GM12878 (cell line): ENCODE measurements at regions of chrX and their contacts with region 1.

Region 1: DNA sequence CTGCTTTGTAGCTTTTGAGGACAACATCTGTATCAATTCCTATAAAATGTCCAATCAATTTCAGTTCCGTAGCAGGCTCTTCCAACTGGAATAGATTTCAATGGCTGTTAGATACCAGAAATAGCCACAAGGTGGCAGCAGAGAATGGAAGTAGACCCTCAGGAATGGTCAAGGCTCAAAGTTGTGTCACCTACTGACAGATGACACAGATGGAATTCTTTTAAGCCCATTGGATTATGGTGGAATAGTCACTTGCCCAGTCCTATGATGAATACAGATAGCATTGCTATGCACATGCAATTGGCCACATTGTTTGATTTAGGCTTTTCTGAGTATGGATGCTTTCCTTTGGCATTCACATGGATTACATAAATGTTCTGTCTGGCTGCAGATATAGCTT is 130.4 kb upstream of the RADX start:
- DNase-seq: peak; percentile 15
- ATAC-seq: peak; percentile 37
- H3K4me3 ChIP-seq: no peak overlapping the region
- H3K27ac ChIP-seq: no peak overlapping the region
- H3K4me1 ChIP-seq: no peaks in the 10 kb centered on the region
- H3K27me3 ChIP-seq: no peaks in the 10 kb centered on the region
- CTCF ChIP-seq: peak; percentile 65 to 79 (median 68)
- EP300 ChIP-seq: no peak
- POLR2A ChIP-seq: no peak
- RAD21 ChIP-seq: peak; percentile 84

Region 2: GRCh38 chrX:106619797-106620196 is 138.5 kb after region 1 on chrX:
- CTCF ChIA-PET with region 1: interaction called, 53 read pairs
- POLR2A ChIA-PET with region 1: no interaction called
- RAD21 ChIA-PET with region 1: interaction called, 17 read pairs
- SMC1A ChIA-PET with region 1: interaction called, 25 read pairs
- in situ Hi-C with region 1: no loop called
- intact Hi-C with region 1: loop called (anchors 2 kb)
- DNase-seq: no peak
- ATAC-seq: peak; percentile 66
- H3K4me3 ChIP-seq: no peak overlapping the region
- H3K27ac ChIP-seq: no peak overlapping the region
- H3K4me1 ChIP-seq: no peaks in the 10 kb centered on the region
- H3K27me3 ChIP-seq: no peaks in the 10 kb centered on the region
- CTCF ChIP-seq: peak; percentile 45 to 53 (median 50); a peak in 5 of 6 replicates
- EP300 ChIP-seq: no peak
- POLR2A ChIP-seq: no peak
- RAD21 ChIP-seq: peak; percentile 53

Region 3: DNA sequence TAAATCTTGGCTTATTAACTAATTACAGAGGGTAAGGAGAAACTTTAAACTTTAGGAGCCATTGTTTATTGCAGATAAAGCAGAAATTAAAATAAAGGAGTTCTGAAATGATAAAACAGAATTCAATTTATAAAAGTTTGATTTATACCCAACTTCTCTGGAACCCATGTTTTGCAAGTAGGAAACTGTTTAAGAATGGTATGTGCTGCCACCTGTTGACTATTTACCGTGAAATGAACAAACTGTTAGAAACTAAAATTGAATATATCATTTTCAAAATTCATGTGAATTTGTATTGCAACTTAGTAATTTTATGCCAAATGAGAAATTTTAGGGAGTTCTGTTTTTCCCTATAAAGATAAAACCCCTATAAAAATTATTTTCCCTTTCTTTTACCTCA is 310.2 kb after region 1 on chrX:
- CTCF ChIA-PET with region 1: interaction called, 9 read pairs
- POLR2A ChIA-PET with region 1: no interaction called
- RAD21 ChIA-PET with region 1: interaction called, 3 read pairs
- SMC1A ChIA-PET with region 1: interaction called, 5 read pairs
- in situ Hi-C with region 1: no loop called
- intact Hi-C with region 1: loop called (anchors 1 kb)
- DNase-seq: no peak
- ATAC-seq: no peak
- H3K4me3 ChIP-seq: no peak overlapping the region
- H3K27ac ChIP-seq: no peak overlapping the region
- H3K4me1 ChIP-seq: no peaks in the 10 kb centered on the region
- H3K27me3 ChIP-seq: no peaks in the 10 kb centered on the region
- CTCF ChIP-seq: peak; percentile 21 to 42 (median 23); a peak in 3 of 6 replicates
- EP300 ChIP-seq: no peak
- POLR2A ChIP-seq: no peak
- RAD21 ChIP-seq: peak; percentile 50

Region 4: GRCh38 chrX:106862972-106863688 is 381.8 kb after region 1 on chrX:
- CTCF ChIA-PET with region 1: no interaction called
- POLR2A ChIA-PET with region 1: no interaction called
- RAD21 ChIA-PET with region 1: no interaction called
- SMC1A ChIA-PET with region 1: no interaction called
- in situ Hi-C with region 1: no loop called
- intact Hi-C with region 1: loop called (anchors 10 kb)
- DNase-seq: no peak
- ATAC-seq: peak; percentile 94
- H3K4me3 ChIP-seq: no peak overlapping the region
- H3K27ac ChIP-seq: no peak overlapping the region
- H3K4me1 ChIP-seq: no peaks in the 10 kb centered on the region
- H3K27me3 ChIP-seq: no peaks in the 10 kb centered on the region
- CTCF ChIP-seq: peak; percentile 64 to 74 (median 66)
- EP300 ChIP-seq: no peak
- POLR2A ChIP-seq: no peak
- RAD21 ChIP-seq: no peak